Right ventricle myocardium inferior (tissue), 1 donor: ENCODE measurements at regions of chr3 and their contacts with region 1.

Region 1: GRCh38 chr3:122679085-122679881 is 1.4 kb upstream of the PARP14 start:
- DNase-seq: peak; percentile 85
- ATAC-seq: peak; percentile 82

Region 2: DNA sequence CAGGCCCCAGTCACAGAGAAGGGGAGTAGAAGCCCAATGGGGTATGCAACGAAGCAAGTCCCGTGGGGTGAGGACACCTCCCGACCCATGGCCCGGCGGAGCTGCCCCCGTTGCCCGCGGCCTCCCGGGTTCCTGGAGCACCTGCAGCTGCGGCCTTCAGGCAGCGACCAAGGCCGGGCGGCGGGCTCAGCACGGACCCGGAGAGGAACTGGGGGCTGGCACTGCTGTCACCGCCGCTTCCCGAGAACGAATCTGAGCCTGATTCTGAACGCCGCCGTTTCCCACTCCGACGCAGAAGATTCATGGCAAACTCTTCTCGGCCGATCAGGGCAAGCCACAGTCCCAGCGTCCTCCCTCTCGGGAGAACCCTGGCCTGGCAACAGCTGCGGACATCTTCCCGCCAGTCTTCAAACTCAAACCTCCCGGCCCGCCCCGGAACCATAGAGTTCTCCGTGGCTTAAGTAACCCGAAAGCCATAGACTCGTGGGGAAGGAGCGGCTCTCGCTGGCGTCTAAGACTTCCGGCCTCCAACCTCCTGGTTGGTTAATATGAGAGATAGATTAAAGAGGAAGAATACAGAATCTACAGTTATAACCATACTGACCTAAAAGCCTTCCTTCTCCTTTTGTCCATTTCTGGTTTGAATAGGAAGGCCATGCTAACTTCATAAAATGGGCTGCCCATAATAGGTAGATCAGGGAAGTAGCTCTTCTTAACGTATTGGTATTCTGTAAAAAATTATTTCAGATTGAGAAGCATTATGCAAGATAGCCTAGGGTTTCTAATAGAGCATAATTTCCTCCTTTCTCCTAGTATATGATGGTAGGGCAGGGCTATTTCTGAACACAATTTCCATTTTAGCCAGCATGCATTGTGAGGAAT is 1133.5 kb before region 1 on chr3 and contains the start of gene POLQ:
- intact Hi-C with region 1: loop called (anchors 10 kb)
- DNase-seq: peak; percentile 95
- ATAC-seq: peak; percentile 99
- total RNA-seq, gene POLQ: 0.57 TPM

Region 3: DNA sequence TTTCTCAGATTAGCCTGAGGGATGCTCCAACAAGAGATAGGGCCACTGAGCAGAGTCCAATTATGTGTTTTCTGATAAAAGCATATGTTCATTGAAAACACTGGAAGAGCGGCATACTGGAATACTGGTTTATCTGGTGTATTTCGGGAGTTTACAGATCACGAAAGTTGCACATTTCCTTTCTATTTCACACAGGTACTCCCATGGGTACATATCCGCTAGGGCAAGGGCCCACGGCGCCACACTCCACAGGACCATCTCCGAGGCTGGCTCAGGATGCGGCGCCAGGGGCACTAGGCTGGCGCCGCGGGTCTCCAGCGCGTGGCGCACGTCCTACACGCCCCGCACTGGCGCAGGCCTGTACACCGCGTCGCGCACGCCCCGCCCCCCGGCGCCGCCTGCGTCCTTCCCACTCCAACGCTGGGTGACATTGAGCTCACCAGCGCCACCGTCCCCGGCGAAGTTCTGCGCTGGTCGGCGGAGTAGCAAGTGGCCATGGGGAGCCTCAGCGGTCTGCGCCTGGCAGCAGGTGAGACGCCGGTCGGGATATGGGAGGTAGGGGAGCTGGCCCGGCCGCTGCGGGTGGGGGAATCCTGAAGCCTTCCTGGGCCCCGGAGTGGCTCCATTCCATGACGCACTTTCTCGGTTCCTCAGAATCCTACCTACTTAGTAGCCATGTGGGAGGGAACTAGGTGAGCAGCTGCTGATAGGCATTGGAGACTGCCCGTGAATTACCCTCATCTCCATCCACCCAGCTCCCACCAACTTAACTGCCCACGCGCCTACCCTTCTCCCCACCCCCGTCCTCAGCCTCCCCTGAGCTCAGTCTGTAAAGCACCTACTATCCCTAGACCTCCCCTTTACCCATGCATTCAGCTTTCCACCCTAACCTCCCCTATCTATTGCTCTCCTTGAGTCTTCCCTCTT is 295.2 kb before region 1 on chr3 and contains the start of gene FAM162A:
- intact Hi-C with region 1: loop called (anchors 2 kb)
- DNase-seq: peak; percentile 99
- ATAC-seq: peak; percentile 99
- total RNA-seq, gene FAM162A: 141 TPM

Region 4: DNA sequence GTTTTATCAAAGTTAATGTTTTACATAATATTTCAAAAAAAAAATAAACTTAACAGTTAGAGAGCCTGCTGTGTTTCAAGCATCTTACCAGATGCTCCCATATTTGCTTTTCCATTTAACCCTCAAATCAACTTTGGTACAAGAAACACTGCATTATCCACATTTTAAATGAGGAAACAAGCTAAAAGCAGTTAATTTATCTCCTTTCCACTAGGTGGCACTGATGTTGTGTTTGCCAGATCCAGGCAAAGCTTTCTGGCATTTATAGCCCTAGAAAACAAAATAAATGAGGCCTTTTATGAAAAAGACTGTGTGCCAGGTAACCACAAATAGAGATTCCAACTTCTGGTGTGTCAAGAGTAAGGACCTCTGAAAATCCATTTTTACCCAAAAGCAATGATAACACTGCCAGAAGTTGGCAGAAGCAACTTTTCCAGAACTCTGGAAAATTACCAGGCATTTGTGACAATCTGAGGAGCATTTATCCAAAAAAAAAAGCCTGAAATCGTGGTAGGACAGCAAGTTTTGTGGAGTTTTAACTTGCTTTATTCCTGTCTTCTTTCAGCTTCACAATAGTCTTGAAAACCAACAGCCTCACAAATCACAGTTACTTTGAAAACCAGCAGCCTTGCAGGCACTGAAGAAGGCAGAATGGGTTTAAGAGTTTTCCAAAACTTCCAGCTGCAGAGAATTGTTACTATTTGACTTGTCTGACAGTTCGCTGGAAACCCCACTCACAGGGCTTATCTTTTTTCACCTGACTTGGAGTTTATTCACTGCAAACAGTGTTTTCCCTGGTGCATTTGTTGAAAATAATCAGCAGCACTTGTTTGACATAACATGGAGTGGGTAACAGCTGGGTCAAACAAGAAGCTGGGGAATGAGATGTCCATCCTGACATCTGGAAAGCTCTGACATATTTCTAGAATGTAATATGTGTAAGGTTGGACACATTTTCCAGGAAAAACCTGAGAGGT is 286.1 kb before region 1 on chr3:
- intact Hi-C with region 1: loop called (anchors 1 kb)
- DNase-seq: no peak
- ATAC-seq: no peak

Region 5: DNA sequence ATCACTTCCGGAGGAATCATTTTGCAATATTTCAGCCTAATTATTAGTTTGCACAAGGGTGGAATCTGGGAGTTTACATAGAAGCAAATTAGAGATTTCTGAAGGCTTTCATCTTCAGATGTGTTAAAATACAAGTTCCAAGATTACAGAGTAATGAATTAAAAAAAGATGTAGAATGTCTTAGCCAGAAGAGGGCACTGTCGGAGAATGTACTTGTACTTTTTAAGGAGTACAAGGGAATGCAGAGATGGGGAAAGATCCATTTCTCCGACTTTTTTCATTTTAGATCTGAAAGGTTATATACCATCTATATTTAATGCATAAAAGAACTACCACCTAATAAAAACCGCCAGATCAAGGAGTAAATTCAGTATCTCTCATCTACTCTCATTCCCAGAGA is 220.3 kb before region 1 on chr3:
- intact Hi-C with region 1: loop called (anchors 5 kb)
- DNase-seq: no peak
- ATAC-seq: no peak

Region 6: DNA sequence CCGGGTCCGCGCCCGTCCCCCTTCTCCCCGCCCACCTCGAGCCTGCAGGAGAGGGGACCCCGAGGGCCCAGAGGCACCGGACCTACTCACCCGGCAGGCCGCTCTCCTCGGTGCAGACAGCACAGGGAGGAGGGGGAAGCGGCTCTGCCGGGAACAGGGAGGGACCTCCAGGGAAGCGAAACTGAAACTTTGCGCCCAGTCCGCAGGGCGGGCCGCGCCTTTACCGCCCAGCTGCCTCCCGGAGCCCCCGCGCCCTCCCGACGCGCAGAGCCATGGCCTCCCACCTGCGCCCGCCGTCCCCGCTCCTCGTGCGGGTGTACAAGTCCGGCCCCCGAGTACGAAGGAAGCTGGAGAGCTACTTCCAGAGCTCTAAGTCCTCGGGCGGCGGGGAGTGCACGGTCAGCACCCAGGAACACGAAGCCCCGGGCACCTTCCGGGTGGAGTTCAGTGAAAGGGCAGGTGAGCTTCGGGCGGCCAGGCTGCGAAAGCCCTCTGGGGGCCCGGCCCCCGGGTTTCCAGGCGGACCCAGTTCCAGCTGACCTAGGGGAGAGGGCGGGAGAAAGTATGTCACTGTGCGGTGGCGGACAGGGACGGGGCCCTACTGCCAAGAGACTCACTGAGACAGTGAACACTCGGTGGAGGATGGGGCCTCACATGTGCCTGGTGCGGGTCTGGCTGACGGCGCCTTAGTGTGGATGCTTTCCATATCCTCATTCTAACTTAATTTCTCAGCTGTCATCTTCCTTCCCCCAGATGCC is 114.9 kb before region 1 on chr3 and contains the starts of genes DTX3L and PARP9:
- intact Hi-C with region 1: loop called (anchors 1 kb)
- DNase-seq: peak; percentile 93
- ATAC-seq: peak; percentile 97
- total RNA-seq, gene DTX3L: 14.6 TPM
- total RNA-seq, gene PARP9: 14.0 TPM

Region 7: DNA sequence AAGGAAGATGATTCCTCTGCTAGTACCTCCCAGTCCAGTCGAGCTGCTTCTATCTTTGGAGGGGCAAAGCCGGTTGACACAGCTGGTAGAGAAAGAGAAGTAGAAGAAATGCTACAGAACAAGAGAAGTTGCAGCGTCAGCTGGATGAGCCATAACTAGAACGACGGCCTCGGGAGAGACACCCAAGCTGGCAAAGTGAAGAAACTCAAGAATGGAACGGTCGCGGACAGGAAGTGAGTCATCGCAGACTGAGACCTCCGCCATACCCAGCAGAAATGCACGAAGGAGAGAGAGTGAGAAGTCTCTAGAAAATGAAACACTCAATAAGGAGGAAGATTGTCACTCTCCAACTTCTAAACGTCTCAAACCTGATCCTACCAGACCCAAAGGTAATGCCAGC is 17.6 kb before region 1 on chr3:
- intact Hi-C with region 1: no loop called
- DNase-seq: peak; percentile 71
- ATAC-seq: no peak

Region 8: DNA sequence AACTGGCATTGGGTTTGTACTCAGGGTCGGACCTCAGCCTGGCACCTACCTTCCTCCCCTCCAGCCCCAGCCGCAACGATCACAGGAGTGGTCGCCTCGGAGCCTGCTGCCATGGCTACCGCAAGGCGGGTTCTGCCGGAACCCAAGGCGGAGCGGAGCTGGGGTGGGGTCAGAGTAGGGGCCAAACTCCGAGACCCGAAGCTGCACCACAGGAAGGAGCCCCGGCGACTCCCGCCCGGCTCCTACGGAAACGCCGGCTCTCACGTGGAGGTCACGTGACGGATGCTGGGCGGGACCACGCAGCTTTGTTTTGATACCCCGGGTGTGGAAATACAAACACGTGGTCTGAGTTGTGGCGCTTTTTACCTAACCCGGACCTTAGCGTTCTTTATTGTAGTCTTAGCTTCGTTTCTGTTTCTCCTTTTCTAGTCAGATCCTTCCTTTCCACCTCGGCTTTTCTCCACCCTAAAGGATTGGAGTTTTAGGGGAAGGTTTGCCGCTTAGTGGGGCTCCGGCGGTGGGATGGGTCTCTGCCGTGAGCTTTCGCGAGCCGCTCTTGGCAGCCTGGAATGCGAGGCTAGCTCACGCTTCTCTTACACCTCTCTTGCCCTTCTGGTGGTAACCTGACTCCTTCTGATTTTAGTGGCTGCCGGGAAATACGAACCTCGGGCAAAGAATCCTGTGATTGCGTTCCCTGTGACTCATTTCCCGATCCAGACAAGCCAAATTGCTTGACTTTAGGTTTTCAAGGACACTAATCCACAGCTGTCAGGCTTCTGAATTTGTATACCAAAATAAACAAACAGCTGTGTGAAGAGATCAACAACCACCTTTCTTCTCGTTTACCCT is 114.5 kb after region 1 on chr3 and contains the start of gene HSPBAP1:
- intact Hi-C with region 1: no loop called
- DNase-seq: peak; percentile 97
- ATAC-seq: peak; percentile 79
- total RNA-seq, gene HSPBAP1: 4.9 TPM